Left ventricle myocardium superior (tissue), 1 donor: ENCODE measurements at regions of chr12 and their contacts with region 1.

Region 1: GRCh38 chr12:57182921-57183790 is 33.4 kb upstream of the NXPH4 start:
- DNase-seq: peak; percentile 81
- ATAC-seq: peak; percentile 83

Region 2: DNA sequence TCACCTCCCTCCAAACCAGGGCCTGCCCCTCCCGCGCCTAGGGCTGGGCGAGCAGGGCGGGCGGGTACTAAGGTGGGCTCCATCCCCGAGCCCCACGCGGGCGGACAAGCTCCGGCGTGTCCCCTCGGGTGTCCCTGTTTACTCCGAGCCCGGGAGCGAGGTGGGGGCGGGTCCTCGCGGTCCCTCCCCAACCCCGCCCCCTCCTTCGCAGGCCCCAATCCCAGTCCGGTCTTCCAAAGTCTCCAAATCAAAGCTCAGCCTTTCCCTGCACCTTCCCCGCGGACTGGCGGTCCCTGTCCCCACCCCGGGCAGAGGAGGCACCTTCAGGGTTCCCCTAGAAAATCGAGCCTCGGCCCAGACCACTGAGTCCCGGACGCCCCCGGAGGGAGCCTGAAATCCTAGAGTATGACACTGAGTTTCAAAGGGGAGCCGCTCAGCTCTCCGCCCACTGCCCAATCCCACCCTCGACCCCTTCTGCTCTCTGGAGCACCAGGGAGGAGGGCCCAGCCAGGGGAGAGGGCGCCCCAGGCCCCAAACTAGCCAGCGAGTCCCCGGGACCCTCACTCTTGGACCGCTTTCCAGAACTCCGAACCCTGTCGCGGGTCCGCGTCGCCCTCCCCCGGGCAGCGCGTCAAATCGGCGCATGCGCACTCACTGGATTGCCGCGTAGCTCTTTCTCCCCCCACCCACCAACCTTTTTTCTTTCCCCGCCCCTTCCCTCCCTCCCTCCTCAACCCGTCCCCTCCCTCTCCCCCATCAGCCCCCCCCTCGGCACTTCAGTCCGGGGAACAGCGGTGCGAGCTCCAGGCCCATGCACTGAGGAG is 55.2 kb before region 1 on chr12 and contains the start of gene LRP1:
- intact Hi-C with region 1: loop called (anchors 2 kb)
- DNase-seq: peak; percentile 92
- ATAC-seq: peak; percentile 83
- total RNA-seq, gene LRP1: 108 TPM